HEK293 (cell line): ENCODE measurements at regions of chr17 and their contacts with region 1.

Region 1: GRCh38 chr17:39473310-39473709 is 12.0 kb downstream of the CDK12 start:
- H3K4me3 ChIP-seq: no peak overlapping the region
- H3K27ac ChIP-seq: no peak overlapping the region
- H3K4me1 ChIP-seq: no peaks in the 10 kb centered on the region
- CTCF ChIP-seq: no peak

Region 2: GRCh38 chr17:39306509-39307212 is 166.6 kb before region 1 on chr17:
- CTCF ChIA-PET with region 1: no interaction called
- POLR2A ChIA-PET with region 1: no interaction called
- H3K4me3 ChIP-seq: no peak overlapping the region
- H3K27ac ChIP-seq: no peak overlapping the region
- H3K4me1 ChIP-seq: no peaks in the 10 kb centered on the region
- CTCF ChIP-seq: no peak

Region 3: DNA sequence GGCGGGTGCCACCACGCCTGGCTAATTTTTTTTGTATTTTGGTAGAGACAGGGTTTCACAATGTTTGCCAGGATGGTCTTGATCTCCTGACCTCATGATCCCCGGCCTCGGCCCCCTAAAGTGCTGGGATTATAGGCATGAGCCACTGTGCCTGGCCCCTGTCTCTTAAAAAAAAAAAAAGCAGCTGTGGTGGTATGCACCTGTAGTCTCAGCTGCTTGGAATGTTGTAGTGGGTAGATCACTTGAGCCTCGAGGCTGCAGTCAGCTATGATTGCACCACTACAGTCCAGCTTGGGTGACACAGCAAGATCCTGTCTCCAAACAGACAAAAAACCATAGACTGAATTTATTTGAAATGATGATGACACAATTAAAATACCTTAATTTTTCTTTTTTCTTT is 12.2 kb after region 1 on chr17:
- CTCF ChIA-PET with region 1: interaction called, 3 read pairs
- POLR2A ChIA-PET with region 1: interaction called, 11 read pairs
- H3K4me3 ChIP-seq: no peak overlapping the region
- H3K27ac ChIP-seq: 0 out of 2 replicates have a peak overlapping the region, but pooled peaks have one; percentile 49
- H3K4me1 ChIP-seq: 0 out of 2 replicates have a peak, but pooled peaks cover 3% of the 10 kb centered on the region
- CTCF ChIP-seq: no peak